Activated CD4-positive, alpha-beta memory T cell treated with anti-CD3 and anti-CD28 coated beads, Interleukin-2, amount 10 ng/mL, durations not matched to agents 7 days and 5 days (primary cell): ENCODE measurements at regions of chr3 and their contacts with region 1.

Region 1: GRCh38 chr3:50611464-50612233 is at the start of gene CISH:
- DNase-seq: peak; percentile 99
- H3K4me3 Mint-ChIP-seq: peak within 1 kb of the TSS; percentile 98
- H3K27ac Mint-ChIP-seq: peak within 1 kb of the TSS; percentile 99
- H3K4me1 Mint-ChIP-seq: peaks cover 33% of the 10 kb centered on the region
- H3K27me3 Mint-ChIP-seq: no peaks in the 10 kb centered on the region
- total RNA-seq, gene CISH: 328 to 335 TPM

Region 2: GRCh38 chr3:49703443-49703927 is 908.2 kb before region 1 on chr3:
- CTCF ChIA-PET with region 1: no interaction called
- POLR2A ChIA-PET with region 1: no interaction called
- DNase-seq: peak; percentile 73
- H3K4me3 Mint-ChIP-seq: no peak overlapping the region
- H3K27ac Mint-ChIP-seq: no peak overlapping the region
- H3K4me1 Mint-ChIP-seq: no peaks in the 10 kb centered on the region
- H3K27me3 Mint-ChIP-seq: no peaks in the 10 kb centered on the region

Region 3: GRCh38 chr3:50057756-50058155 is 553.9 kb before region 1 on chr3:
- CTCF ChIA-PET with region 1: no interaction called
- POLR2A ChIA-PET with region 1: no interaction called
- DNase-seq: no peak
- H3K4me3 Mint-ChIP-seq: no peak overlapping the region
- H3K27ac Mint-ChIP-seq: no peak overlapping the region
- H3K4me1 Mint-ChIP-seq: no peaks in the 10 kb centered on the region
- H3K27me3 Mint-ChIP-seq: no peaks in the 10 kb centered on the region

Region 4: GRCh38 chr3:50337191-50337841 is 274.3 kb before region 1 on chr3:
- CTCF ChIA-PET with region 1: interaction called, 8 read pairs
- POLR2A ChIA-PET with region 1: interaction called, 440 read pairs
- DNase-seq: peak; percentile 97
- H3K4me3 Mint-ChIP-seq: peak overlapping the region; percentile 85
- H3K27ac Mint-ChIP-seq: peak overlapping the region; percentile 94
- H3K4me1 Mint-ChIP-seq: peaks cover 63% of the 10 kb centered on the region
- H3K27me3 Mint-ChIP-seq: no peaks in the 10 kb centered on the region

Region 5: GRCh38 chr3:50542177-50543034 is 69.2 kb before region 1 on chr3:
- CTCF ChIA-PET with region 1: interaction called, 11 read pairs
- POLR2A ChIA-PET with region 1: interaction called, 3 read pairs
- DNase-seq: peak; percentile 67
- H3K4me3 Mint-ChIP-seq: no peak overlapping the region
- H3K27ac Mint-ChIP-seq: no peak overlapping the region
- H3K4me1 Mint-ChIP-seq: no peaks in the 10 kb centered on the region
- H3K27me3 Mint-ChIP-seq: peaks cover 20% of the 10 kb centered on the region

Region 6: DNA sequence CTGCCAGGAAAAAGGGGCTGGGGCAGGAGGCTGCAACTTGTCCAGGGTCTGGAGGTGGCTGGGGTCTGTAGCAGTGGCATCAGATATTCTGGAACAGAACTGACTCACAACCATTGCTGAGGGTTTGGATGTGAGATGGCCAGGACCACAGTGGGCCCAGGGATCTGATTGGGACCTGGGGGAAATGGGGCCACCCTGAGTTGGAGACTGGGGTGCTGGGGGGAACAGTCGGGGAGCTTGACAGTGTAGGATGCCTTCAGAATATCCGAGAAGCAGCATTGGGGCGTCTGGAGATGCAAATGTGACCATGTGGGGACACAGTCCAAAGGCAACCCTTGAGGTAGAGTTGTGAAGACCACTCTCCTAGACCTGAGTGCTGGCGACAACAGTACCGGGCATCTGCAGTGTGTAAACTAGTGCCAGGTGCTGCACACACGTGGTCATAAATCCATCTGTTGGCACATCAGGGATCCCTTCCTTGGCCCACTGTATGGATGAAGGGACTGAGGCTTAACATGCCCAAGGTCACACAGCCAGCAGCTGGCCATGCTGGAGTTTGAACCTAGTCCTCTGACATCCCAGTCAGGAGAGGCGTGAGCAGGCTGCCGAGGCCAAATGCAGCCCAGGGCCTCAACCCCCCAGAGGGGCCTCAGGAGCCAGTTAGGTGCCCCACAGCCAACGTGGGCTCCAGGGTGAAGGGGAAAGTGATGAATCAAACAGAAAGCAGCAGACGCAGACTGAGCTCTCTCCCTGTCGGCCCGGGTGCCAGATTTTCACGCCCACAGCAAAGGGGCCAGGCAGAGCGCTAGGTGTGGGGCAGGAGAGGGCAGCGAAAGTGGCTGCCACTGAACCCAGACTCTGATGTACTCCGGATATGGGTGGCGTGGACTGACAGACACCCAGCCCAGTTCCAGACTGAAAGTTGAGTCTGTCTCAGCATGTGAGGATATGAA is 23.6 kb before region 1 on chr3:
- CTCF ChIA-PET with region 1: interaction called, 854 read pairs
- POLR2A ChIA-PET with region 1: interaction called, 4,963 read pairs
- DNase-seq: peak; percentile 81
- H3K4me3 Mint-ChIP-seq: peak overlapping the region; percentile 6
- H3K27ac Mint-ChIP-seq: peak overlapping the region; percentile 96
- H3K4me1 Mint-ChIP-seq: peaks cover 78% of the 10 kb centered on the region
- H3K27me3 Mint-ChIP-seq: no peaks in the 10 kb centered on the region

Region 7: DNA sequence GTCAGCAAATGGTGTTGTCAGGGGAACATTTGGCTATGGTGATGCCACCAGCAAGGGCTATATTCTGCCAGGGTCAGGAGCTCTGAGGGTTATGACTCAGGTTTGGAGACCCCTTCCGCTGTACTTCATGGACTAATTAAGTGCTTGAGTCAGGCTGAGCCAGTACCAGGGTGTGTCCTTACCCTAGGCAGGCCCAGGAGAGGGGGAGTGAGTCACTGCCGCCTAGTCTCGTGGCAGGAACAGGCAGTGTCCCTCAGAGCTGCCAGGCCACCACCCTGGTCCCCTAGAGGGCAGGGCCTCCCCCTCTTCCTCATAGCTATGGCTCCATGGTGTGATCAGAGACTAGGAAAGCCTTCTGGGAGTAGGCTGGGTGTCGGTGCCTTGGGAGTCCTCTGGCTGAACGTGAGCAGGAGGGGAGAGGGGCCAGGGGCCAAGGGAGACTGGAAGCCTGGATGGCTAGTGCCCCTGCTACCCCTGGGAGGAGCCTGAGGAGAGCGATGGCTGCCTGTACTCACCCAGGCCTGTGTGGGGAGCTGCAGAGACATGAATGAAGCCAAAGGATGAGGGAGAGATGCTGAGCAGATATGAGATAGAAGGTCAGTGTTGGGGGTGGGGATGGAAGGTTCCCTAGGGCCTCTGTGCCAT is 15.9 kb after region 1 on chr3:
- CTCF ChIA-PET with region 1: interaction called, 21 read pairs
- POLR2A ChIA-PET with region 1: interaction called, 978 read pairs
- DNase-seq: no peak
- H3K4me3 Mint-ChIP-seq: no peak overlapping the region
- H3K27ac Mint-ChIP-seq: peak overlapping the region; percentile 40
- H3K4me1 Mint-ChIP-seq: peaks cover 97% of the 10 kb centered on the region
- H3K27me3 Mint-ChIP-seq: no peaks in the 10 kb centered on the region

Region 8: DNA sequence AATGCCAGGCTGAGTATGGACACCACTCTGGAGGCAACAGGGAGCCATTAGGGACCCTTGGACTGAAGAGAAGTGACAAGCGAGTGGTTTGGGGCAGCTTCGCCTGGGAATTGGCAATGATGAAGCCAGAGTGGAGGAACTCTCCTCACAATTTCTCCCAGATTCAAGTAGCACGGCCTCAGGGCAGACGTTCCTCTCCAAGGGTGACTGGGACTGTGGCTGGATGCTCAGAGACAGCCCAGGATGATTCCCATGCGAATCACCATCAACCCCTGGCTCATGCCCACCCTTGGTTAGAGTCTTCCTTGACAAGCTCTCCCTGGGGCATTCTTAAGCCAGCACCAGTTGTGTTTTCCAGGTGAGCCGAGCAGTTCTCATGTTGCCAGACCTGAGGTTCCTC is 46.8 kb after region 1 on chr3:
- CTCF ChIA-PET with region 1: interaction called, 57 read pairs
- POLR2A ChIA-PET with region 1: interaction called, 24 read pairs
- DNase-seq: no peak
- H3K4me3 Mint-ChIP-seq: no peak overlapping the region
- H3K27ac Mint-ChIP-seq: no peak overlapping the region
- H3K4me1 Mint-ChIP-seq: peaks cover 18% of the 10 kb centered on the region
- H3K27me3 Mint-ChIP-seq: no peaks in the 10 kb centered on the region

Region 9: GRCh38 chr3:51384726-51385473 is 773.3 kb after region 1 on chr3 and contains the start of gene MANF:
- CTCF ChIA-PET with region 1: interaction called, 15 read pairs
- POLR2A ChIA-PET with region 1: interaction called, 65 read pairs
- DNase-seq: peak; percentile 99
- H3K4me3 Mint-ChIP-seq: peak within 1 kb of the TSS; percentile 98
- H3K27ac Mint-ChIP-seq: peak within 1 kb of the TSS; percentile 95
- H3K4me1 Mint-ChIP-seq: peaks cover 51% of the 10 kb centered on the region
- H3K27me3 Mint-ChIP-seq: no peaks in the 10 kb centered on the region
- total RNA-seq, gene MANF: 143 to 149 TPM